Body of pancreas (tissue), 4 donors: ENCODE measurements at regions of chr2 and their contacts with region 1.

Region 1: DNA sequence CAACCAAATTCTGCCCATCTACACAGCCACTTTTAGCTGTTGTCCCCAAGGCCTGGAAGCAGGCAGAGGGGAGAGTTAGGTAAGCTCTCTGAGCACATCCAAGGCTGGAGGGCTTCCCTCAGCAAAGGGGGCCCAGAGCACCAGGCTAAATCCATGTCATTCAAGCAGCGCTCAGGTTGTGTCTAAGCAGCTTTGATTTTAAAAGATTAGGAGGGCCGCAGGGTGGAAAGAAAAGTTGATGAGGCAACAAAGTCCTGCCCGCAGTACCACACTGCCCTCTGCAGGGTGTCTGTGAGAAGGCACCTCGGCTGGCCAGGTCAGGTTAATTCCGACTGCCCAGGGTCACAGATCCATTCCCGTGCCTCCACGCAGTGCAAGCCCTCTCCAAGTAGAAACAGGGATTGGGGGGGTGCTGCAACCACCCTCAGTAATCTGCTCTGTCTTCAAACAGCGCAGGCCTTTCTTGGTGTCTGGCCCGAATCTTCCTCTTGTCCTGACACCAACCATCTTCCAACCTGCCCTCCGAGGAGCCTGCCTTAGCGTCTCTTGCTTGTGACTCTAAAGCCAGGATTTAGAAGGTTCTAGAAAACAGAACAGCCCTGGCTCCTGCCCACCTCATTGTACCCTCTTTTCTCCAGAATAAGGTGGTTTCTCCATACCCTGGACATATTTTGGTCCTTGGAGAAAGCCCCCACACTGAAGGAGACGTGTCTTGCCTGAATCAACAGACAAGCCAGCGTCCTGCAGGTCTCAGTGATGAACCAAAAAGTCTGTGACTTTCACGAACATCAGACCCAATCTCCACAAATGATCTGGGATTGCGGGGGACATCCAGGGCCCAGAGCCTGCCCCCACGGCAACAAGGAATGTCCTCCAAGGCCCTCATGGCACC is 289.2 kb downstream of the TNS1 start:
- DNase-seq: peak; percentile 68 to 77 (median 76)
- ATAC-seq: peak; percentile 80
- H3K4me3 ChIP-seq: no peak overlapping the region
- H3K27ac ChIP-seq: no peak overlapping the region
- H3K4me1 ChIP-seq: no peaks in the 10 kb centered on the region
- H3K27me3 ChIP-seq: no peaks in the 10 kb centered on the region
- CTCF ChIP-seq: peak; percentile 88 to 92 (median 90)
- POLR2A ChIP-seq: no peak

Region 2: DNA sequence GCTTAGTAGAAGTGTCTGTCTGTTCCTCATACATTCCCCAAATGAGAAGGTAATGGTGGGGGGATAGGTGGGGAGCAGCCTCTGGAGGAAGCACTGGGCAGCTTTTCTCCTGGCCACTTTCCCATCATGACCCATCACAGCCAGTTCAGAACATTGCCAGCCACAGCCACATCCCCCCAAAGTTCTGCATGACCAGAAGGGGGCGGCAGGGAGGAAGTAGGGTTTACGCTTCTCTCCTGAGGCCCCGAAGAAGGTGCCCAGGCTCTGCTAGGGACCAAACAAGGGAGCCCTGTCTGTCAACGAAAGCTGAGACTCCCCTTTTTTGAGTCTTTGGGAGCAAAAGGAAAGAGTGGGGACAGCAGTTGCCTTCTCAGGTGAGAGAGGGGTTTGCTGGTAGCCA is 1026.0 kb before region 1 on chr2:
- intact Hi-C with region 1: loop called (anchors 10 kb)
- DNase-seq: no peak
- ATAC-seq: no peak
- H3K4me3 ChIP-seq: no peak overlapping the region
- H3K27ac ChIP-seq: no peak overlapping the region
- H3K4me1 ChIP-seq: peaks cover 15% of the 10 kb centered on the region
- H3K27me3 ChIP-seq: peaks cover 3 to 13% of the 10 kb centered on the region in 2 donors
- CTCF ChIP-seq: peak in 2 of 7 experiments; percentile 6 to 7
- POLR2A ChIP-seq: no peak

Region 3: DNA sequence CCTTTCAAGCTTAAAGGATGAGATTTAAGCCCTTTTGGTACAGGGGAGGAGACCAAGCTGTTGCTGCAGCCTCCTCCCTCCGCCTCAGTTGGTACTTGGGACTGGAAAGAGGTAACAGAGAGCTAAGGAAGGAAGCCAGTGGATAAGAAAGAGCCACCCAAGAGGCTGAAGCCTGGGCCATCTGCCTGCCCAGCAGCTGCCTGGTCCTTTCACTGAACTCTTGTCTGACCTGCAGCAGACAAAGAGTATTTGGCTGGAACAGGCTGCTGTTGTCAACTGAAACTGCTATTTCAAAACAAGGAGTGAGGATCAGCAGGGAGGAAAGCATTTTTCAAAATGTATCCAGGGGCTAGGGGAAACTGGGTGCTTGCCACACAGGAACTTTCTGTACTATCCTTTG is 258.8 kb after region 1 on chr2:
- intact Hi-C with region 1: no loop called
- DNase-seq: peak in 2 of 4 donors; percentile 5 to 7
- ATAC-seq: no peak
- H3K4me3 ChIP-seq: no peak overlapping the region
- H3K27ac ChIP-seq: peak overlapping the region in 1 of 4 donors; percentile 8
- H3K4me1 ChIP-seq: peaks cover 8% of the 10 kb centered on the region
- H3K27me3 ChIP-seq: no peaks in the 10 kb centered on the region
- CTCF ChIP-seq: no peak
- POLR2A ChIP-seq: no peak